Right cardiac atrium (tissue), 5 donors: ENCODE measurements at regions of chr4 and their contacts with region 1.

Region 1: GRCh38 chr4:141121768-141122454 is 11.4 kb downstream of the RNF150 start:
- DNase-seq: no peak
- ATAC-seq: no peak
- H3K4me3 ChIP-seq: no peak overlapping the region
- H3K27ac ChIP-seq: no peak overlapping the region
- H3K4me1 ChIP-seq: peaks cover 5% of the 10 kb centered on the region
- H3K27me3 ChIP-seq: no peaks in the 10 kb centered on the region

Region 2: DNA sequence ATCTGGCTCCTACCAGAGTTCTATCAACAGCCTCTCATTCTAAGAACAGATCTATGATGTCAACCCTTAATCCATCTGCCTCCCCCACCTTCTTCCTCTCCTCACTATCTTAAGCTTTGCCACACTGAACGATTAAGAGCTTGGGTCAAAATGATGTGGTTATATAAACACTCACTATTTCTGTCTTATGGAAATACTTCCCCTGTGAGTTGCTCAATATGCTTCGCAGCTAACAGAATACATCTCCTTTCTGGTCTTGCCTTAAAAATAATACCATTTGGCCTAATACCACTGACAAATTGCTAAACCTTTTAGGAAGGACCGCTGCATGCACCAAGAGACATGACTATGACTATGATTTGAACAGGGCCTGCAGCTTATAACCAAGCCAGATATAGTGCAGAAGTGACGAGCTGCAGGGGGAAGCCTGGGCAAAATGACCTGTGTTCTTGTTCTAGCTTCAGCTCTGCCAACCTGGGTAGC is 119.5 kb before region 1 on chr4:
- intact Hi-C with region 1: loop called in 1 of 4 experiments (anchors 10 kb)
- DNase-seq: no peak
- ATAC-seq: peak; percentile 73 to 76
- H3K4me3 ChIP-seq: no peak overlapping the region
- H3K27ac ChIP-seq: peak overlapping the region; percentile 79
- H3K4me1 ChIP-seq: peaks cover 3% of the 10 kb centered on the region
- H3K27me3 ChIP-seq: no peaks in the 10 kb centered on the region

Region 3: GRCh38 chr4:141371206-141371605 is 249.3 kb after region 1 on chr4:
- intact Hi-C with region 1: no loop called
- DNase-seq: no peak
- ATAC-seq: no peak
- H3K4me3 ChIP-seq: no peak overlapping the region
- H3K27ac ChIP-seq: no peak overlapping the region
- H3K4me1 ChIP-seq: no peaks in the 10 kb centered on the region
- H3K27me3 ChIP-seq: no peaks in the 10 kb centered on the region